Heart left ventricle (tissue), 16 donors: ENCODE measurements at regions of chr22 and their contacts with region 1.

Region 1: GRCh38 chr22:38927033-38927781 is 30.2 kb upstream of the APOBEC3A start:
- DNase-seq: peak; percentile 67 to 88 (median 81)
- ATAC-seq: peak; percentile 49 to 84 (median 76)
- H3K4me3 ChIP-seq: peak overlapping the region in 9 of 12 donors; percentile 29 to 45 (median 39)
- H3K27ac ChIP-seq: peak overlapping the region in 11 of 12 donors; percentile 10 to 75 (median 66)
- H3K4me1 ChIP-seq: peaks cover 0 to 33% (median 19%) of the 10 kb centered on the region in 12 donors
- H3K27me3 ChIP-seq: peaks cover 0 to 15% (median 0%) of the 10 kb centered on the region in 9 donors
- CTCF ChIP-seq: peak; percentile 36 to 84 (median 66)
- POLR2A ChIP-seq: no peak

Region 2: GRCh38 chr22:38788021-38788816 is 139.0 kb before region 1 on chr22:
- intact Hi-C with region 1: loop called in 1 of 10 experiments (anchors 10 kb)
- DNase-seq: peak in 4 of 5 donors; percentile 54 to 74 (median 64)
- ATAC-seq: peak; percentile 68 to 89 (median 85)
- H3K4me3 ChIP-seq: no peak overlapping the region
- H3K27ac ChIP-seq: peak overlapping the region; percentile 69 to 92 (median 82)
- H3K4me1 ChIP-seq: peaks cover 4 to 68% (median 40%) of the 10 kb centered on the region in 12 donors
- H3K27me3 ChIP-seq: no peaks in the 10 kb centered on the region
- CTCF ChIP-seq: no peak
- POLR2A ChIP-seq: peak in 1 of 2 donors; percentile 33

Region 3: DNA sequence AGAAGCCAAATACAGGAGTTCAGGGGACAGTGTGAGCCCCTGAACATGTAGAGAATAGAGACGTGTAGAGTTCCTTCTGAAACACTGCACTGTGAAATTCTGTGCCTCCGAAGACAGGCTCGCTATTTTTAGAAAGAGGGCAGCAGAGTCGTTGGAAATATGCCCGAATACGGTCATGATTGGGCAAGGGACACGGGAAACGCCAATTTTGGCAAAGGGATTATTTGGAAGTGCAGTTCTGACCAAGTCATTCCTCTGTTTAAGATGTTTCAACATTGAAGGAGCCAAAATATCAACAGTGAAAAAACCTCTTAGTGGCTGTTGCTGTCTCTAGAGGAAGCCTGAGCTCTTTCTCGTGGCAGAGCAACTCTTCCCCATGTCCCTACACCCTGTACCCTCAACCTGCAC is 45.7 kb before region 1 on chr22:
- intact Hi-C with region 1: loop called in 2 of 10 experiments (anchors 5 kb)
- DNase-seq: peak in 2 of 5 donors; percentile 56
- ATAC-seq: peak; percentile 72 to 79 (median 72)
- H3K4me3 ChIP-seq: peak overlapping the region in 1 of 12 donors; percentile 9
- H3K27ac ChIP-seq: peak overlapping the region; percentile 63 to 90 (median 82)
- H3K4me1 ChIP-seq: peaks cover 8 to 24% (median 17%) of the 10 kb centered on the region in 12 donors
- H3K27me3 ChIP-seq: no peaks in the 10 kb centered on the region
- CTCF ChIP-seq: peak in 2 of 12 donors; percentile 9 to 13
- POLR2A ChIP-seq: no peak